HepG2 (cell line): ENCODE measurements at regions of chr11 and their contacts with region 1.

Region 1: GRCh38 chr11:61792310-61793085 is at the starts of genes FEN1 and TMEM258:
- DNase-seq: peak; percentile 91
- ATAC-seq: peak; percentile 86
- H3K4me3 ChIP-seq: peak within 1 kb of the TSS; percentile 68 to 87 (median 81)
- H3K27ac ChIP-seq: peak within 1 kb of the TSS; percentile 99
- H3K4me1 ChIP-seq: peaks cover 49% of the 10 kb centered on the region
- H3K27me3 ChIP-seq: no peaks in the 10 kb centered on the region; a peak in 1 of 5 replicates
- CTCF ChIP-seq: no peak
- EP300 ChIP-seq: no peak
- POLR2A ChIP-seq: peak; percentile 79 to 89
- RAD21 ChIP-seq: no peak
- total RNA-seq, gene FEN1: 102 and 116 TPM in 2 replicates
- total RNA-seq, gene TMEM258: 164 and 175 TPM in 2 replicates

Region 2: GRCh38 chr11:61756452-61757212 is 35.9 kb before region 1 on chr11:
- CTCF ChIA-PET with region 1: interaction called, 18 read pairs
- POLR2A ChIA-PET with region 1: interaction called, 43 read pairs
- in situ Hi-C with region 1: no loop called
- intact Hi-C with region 1: no loop called
- DNase-seq: peak; percentile 94
- ATAC-seq: peak; percentile 84
- H3K4me3 ChIP-seq: peak overlapping the region; percentile 32 to 69 (median 66)
- H3K27ac ChIP-seq: peak overlapping the region; percentile 100
- H3K4me1 ChIP-seq: peaks cover 71% of the 10 kb centered on the region
- H3K27me3 ChIP-seq: no peaks in the 10 kb centered on the region
- CTCF ChIP-seq: peak; percentile 10; the same call in 1 of the 2 replicates
- EP300 ChIP-seq: peak in 1 of 2 experiments; percentile 53; a peak in 2 of 4 replicates
- POLR2A ChIP-seq: peak in 1 of 2 experiments; percentile 96; a peak in 2 of 4 replicates
- RAD21 ChIP-seq: peak; percentile 33; the same call in 1 of the 2 replicates

Region 3: DNA sequence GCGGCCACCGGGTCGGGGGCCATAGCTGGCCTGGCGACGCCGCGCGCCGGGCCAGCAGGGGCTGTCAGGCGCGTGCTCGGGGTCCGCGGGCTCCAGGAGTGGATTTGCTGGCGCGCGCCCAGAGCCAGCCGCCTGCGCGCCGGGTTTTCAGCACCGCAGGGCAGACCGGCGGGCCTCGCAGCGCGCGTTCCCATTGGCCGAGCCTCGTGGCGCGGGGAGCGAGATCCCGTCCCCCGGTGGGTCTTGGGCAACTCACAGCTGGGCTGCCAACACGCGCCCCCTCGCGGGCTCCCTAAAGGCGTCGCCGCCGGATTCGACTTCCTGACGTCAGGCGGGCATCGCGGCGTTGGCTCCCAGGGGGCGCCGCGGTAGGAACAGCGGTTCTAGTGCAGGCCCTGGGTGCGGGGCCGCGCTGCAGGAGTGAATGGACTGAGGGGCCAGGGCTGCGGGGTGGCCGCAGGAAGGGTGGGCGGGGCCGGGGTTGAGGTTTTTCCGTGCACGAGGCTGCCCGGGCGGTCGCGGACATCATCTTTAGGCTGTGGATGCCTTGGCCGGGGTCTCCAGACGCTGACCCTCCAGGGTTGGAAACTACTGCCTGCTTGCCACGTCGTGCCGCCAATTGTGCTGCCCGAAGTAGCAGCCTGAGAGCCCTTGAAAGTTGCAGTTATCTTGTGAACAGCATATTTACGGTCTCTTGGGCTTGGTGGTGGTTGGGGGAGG is 24.4 kb after region 1 on chr11 and contains the start of gene FADS1:
- CTCF ChIA-PET with region 1: interaction called, 6 read pairs
- POLR2A ChIA-PET with region 1: interaction called, 50 read pairs
- in situ Hi-C with region 1: no loop called
- intact Hi-C with region 1: loop called (anchors 1 kb)
- DNase-seq: peak; percentile 95
- ATAC-seq: peak; percentile 71
- H3K4me3 ChIP-seq: peak within 1 kb of the TSS; percentile 74 to 94 (median 81)
- H3K27ac ChIP-seq: peak within 1 kb of the TSS; percentile 99
- H3K4me1 ChIP-seq: peaks cover 52% of the 10 kb centered on the region
- H3K27me3 ChIP-seq: no peaks in the 10 kb centered on the region; a peak in 1 of 5 replicates
- CTCF ChIP-seq: peak; percentile 95
- EP300 ChIP-seq: 0 out of 4 replicates have a peak, but pooled peaks of 1 of the 2 experiments have one; percentile 10
- POLR2A ChIP-seq: no peak
- RAD21 ChIP-seq: peak; percentile 74; the same call in 1 of the 2 replicates
- total RNA-seq, gene FADS1: 65.8 and 108 TPM in 2 replicates

Region 4: DNA sequence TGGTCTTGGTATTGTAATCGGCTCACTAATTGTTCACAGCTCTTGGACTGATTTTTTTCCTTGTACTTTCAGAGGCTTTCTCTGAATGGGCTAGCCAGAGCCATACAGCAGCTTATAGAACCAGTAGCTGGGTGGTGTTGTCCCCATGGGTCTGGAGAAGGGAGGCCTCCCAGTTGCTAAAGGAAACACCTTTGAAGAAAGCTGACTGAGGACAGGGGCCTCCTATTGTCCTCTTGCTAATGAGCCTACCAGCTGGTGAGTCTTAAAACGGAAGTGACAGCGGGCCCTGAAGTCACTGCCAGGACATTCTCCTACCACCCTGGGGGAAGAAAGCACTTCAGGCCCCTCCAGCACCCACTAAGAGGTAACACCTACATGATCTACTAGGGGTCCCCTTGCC is 88.9 kb after region 1 on chr11:
- CTCF ChIA-PET with region 1: no interaction called
- POLR2A ChIA-PET with region 1: no interaction called
- in situ Hi-C with region 1: no loop called
- intact Hi-C with region 1: no loop called
- DNase-seq: no peak
- ATAC-seq: no peak
- H3K4me3 ChIP-seq: no peak overlapping the region
- H3K27ac ChIP-seq: no peak overlapping the region
- H3K4me1 ChIP-seq: no peaks in the 10 kb centered on the region
- H3K27me3 ChIP-seq: no peaks in the 10 kb centered on the region
- CTCF ChIP-seq: no peak
- EP300 ChIP-seq: no peak
- POLR2A ChIP-seq: no peak
- RAD21 ChIP-seq: no peak

Region 5: DNA sequence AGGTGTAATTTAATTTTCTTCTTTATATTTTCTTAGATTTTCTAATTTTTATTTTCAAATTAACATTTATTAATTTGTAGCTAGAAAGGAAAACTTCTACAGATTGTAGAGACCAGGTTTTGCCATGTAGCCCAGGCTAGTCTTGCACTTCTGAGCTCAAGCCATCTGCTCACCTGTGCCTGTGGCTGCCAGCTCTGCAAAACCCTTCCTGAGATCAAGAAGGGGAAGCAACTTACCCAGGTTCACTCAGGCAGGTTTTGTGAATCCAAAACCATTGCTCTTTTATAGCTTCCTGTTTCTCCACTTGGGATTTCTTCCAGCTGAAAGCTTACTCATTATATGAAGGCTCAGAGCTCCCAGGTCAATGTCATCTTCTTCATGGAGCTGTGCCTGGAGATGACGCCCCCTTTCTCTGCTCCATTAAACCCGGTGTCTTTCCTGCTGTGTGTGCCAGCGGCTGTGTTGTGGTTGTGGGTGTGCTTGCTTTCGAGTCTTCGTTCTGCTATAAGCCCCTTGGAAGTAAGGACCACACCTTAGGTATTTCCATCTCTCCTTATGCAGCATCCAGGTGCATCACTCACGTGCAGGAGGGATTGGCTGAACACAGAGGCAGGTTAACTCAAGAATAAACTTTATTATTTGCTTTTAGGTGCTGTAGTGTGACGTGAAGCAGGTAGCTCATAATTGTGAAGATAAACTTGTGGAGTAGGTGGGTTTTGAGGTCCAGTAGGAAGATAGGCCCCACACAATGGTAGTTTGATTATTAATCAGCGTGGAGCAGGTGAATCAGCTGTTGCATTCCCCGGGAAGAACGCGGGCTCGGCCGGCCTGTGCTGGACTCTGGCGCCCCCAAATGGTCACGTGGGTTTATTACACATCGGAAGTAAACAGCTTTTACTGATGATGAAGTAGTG is 289.1 kb after region 1 on chr11:
- CTCF ChIA-PET with region 1: interaction called, 4 read pairs
- POLR2A ChIA-PET with region 1: interaction called, 8 read pairs
- in situ Hi-C with region 1: loop called (anchors 10 kb)
- intact Hi-C with region 1: no loop called
- DNase-seq: peak; percentile 46
- ATAC-seq: peak; percentile 71
- H3K4me3 ChIP-seq: no peak overlapping the region; a peak in 1 of 6 replicates
- H3K27ac ChIP-seq: no peak overlapping the region
- H3K4me1 ChIP-seq: peaks cover 6% of the 10 kb centered on the region; the same call in 1 of the 2 replicates
- H3K27me3 ChIP-seq: no peaks in the 10 kb centered on the region
- CTCF ChIP-seq: peak; percentile 92
- EP300 ChIP-seq: no peak
- POLR2A ChIP-seq: no peak
- RAD21 ChIP-seq: peak; percentile 89